ENCODE measurements at regions of chr14 and their contacts with region 1.

Region 1: GRCh38 chr14:38138473-38139138 is 69.1 kb upstream of the SSTR1 start:
- DNase-seq: no peak
- H3K4me3 ChIP-seq: no peak overlapping the region
- H3K27me3 ChIP-seq: no peaks in the 10 kb centered on the region
- CTCF ChIP-seq: no peak

Region 2: GRCh38 chr14:37985826-37986470 is 152.7 kb before region 1 on chr14:
- CTCF ChIA-PET with region 1: no interaction called
- POLR2A ChIA-PET with region 1: no interaction called
- DNase-seq: no peak
- H3K4me3 ChIP-seq: no peak overlapping the region
- H3K27me3 ChIP-seq: no peaks in the 10 kb centered on the region
- CTCF ChIP-seq: peak; percentile 79

Region 3: GRCh38 chr14:38089123-38089522 is 49.5 kb before region 1 on chr14:
- CTCF ChIA-PET with region 1: no interaction called
- POLR2A ChIA-PET with region 1: no interaction called
- DNase-seq: no peak
- H3K4me3 ChIP-seq: no peak overlapping the region
- H3K27me3 ChIP-seq: no peaks in the 10 kb centered on the region
- CTCF ChIP-seq: no peak

Region 4: DNA sequence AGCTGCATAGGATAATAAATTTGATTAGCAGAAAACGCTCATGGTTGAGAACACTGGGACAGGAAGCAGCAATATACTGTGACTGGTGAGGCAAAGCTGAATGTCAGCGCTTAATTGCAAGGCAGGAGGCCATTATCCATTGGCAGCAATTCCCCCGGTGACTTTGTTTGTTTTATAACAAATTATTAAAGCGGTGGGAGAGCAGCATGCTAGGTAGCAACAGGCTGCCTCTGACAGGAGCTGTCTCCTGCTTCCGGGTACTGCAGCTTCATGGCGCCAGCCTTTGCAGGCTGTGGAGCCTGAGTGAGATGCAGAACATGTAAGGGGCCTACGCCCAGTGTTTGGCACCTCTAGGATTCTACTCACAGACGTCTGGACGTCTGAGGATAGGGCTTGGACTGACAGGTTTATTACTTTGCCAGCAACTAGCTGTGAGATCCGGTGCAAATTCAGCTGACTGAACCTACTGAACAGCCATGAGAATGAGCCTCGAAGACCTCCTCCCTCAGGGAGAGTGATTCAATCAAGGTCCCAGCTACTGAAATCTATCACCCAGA is 13.0 kb before region 1 on chr14:
- CTCF ChIA-PET with region 1: interaction called, 4 read pairs
- POLR2A ChIA-PET with region 1: interaction called, 11 read pairs
- DNase-seq: no peak
- H3K4me3 ChIP-seq: no peak overlapping the region
- H3K27me3 ChIP-seq: no peaks in the 10 kb centered on the region
- CTCF ChIP-seq: no peak